Heart right ventricle (tissue), 16 donors: ENCODE measurements at regions of chr4 and their contacts with region 1.

Region 1: DNA sequence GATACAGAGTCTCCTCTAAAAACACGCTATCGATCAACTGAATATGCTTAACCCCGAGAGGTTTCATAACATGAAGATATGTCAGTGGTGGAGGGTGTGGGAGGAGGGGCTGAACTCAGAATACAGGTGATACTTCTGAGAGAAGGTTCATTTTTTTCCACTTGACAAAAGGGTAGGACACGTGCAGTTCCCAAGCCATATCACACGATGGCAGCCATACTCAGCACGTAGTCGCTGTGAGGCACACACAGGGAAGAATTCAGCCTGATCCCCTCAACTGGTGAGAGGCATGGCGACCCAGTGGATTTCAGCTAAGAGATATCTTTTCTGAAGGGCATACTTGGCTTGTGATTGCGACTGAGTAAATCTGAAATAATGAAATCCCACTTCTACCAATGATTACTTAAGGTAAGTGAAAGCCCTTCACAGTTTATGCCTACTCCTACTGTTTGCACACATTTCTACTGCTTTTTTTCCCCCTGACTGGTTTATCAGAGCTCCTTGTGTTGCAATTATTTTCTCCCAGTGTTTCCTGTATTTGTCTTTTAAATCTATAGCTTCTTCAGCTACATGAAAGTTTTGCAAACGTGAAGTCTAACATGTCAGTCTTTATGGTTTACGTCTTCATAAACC is 133.1 kb downstream of the CORIN start:
- DNase-seq: peak; percentile 34 to 38
- ATAC-seq: peak; percentile 80 to 97 (median 90)
- H3K4me3 ChIP-seq: peak overlapping the region in 9 of 10 donors; percentile 2 to 41 (median 33)
- H3K27ac ChIP-seq: peak overlapping the region in 4 of 10 donors; percentile 9 to 70 (median 59)
- H3K4me1 ChIP-seq: peaks cover 0 to 20% (median 8%) of the 10 kb centered on the region in 9 donors
- H3K27me3 ChIP-seq: peaks cover 0 to 5% (median 0%) of the 10 kb centered on the region in 7 donors
- CTCF ChIP-seq: peak in 8 of 9 donors; percentile 36 to 65 (median 48)

Region 2: DNA sequence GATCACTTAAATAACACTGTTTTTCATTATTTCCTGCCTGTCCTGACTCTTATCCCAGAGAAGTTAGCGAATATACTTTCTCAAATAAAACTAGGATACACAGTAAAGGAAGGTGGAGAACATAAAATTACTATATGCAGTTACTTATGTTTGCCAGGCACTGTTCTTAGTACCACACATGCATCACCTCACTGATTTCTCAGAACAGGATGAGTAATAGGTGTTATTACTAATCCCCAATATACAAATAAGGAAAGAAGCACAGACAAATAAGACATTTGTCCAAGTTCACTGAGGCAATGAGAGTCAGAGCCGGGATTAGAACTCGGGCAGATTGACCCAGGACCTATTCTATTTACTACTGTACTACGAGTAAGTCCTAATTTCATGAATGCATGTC is 41.3 kb after region 1 on chr4:
- intact Hi-C with region 1: loop called in 1 of 10 experiments (anchors 5 kb)
- DNase-seq: no peak
- ATAC-seq: no peak
- H3K4me3 ChIP-seq: no peak overlapping the region
- H3K27ac ChIP-seq: peak overlapping the region in 6 of 10 donors; percentile 14 to 85 (median 72)
- H3K4me1 ChIP-seq: peaks cover 0 to 20% (median 10%) of the 10 kb centered on the region in 9 donors
- H3K27me3 ChIP-seq: no peaks in the 10 kb centered on the region
- CTCF ChIP-seq: no peak

Region 3: GRCh38 chr4:47836641-47837093 is 131.9 kb after region 1 on chr4:
- intact Hi-C with region 1: loop called (anchors 1 to 10 kb)
- DNase-seq: peak; percentile 71 to 82
- ATAC-seq: peak; percentile 91 to 96 (median 94)
- H3K4me3 ChIP-seq: peak overlapping the region; percentile 32 to 77 (median 62)
- H3K27ac ChIP-seq: peak overlapping the region; percentile 6 to 86 (median 65)
- H3K4me1 ChIP-seq: peaks cover 2 to 44% (median 31%) of the 10 kb centered on the region in 9 donors
- H3K27me3 ChIP-seq: peaks cover 0 to 28% (median 4%) of the 10 kb centered on the region in 7 donors
- CTCF ChIP-seq: peak; percentile 35 to 84 (median 67)

Region 4: DNA sequence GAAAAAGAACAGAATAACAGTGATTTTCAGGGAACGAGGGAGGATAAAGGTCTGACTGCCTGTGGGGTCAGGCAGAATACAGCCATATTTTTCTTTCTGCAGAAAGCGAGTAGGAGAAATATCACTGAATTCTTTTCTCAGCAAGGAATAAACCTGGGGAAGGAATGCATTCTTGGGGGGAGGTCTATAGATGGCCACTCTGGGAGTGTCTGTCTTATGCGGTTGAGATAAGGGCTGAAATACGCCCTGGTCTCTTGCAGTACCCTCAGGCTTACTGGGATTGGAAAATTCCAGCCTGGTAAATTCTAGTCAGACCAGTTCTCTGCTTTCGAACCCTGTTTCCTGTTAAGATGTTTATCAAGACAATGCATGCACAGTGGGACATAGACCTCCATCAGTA is 285.3 kb after region 1 on chr4:
- intact Hi-C with region 1: no loop called
- DNase-seq: no peak
- ATAC-seq: no peak
- H3K4me3 ChIP-seq: no peak overlapping the region
- H3K27ac ChIP-seq: no peak overlapping the region
- H3K4me1 ChIP-seq: no peaks in the 10 kb centered on the region
- H3K27me3 ChIP-seq: no peaks in the 10 kb centered on the region
- CTCF ChIP-seq: no peak